ENCODE measurements at regions of chr9 and their contacts with region 1.

Region 1: DNA sequence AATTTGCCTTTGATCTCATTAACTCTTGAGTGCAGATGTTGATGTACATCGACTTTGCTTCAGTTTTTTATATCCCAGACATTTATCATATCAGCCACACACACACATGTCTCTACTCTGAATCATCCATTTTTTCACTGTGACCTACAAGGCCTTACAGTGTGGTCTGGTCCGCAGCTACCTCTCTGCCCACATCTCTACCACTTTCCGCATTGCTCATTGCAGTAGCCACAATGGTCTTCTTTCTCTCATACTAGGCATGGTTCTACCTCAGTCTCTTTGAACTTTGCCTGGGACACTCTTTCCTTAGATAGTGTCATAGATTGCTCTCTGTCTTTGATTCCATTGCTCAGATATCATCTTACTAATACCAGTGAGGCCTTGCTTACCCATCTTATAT is 87.9 kb upstream of the FSD1L start:
- DNase-seq: peak; percentile 84
- H3K4me3 Mint-ChIP-seq: no peak overlapping the region
- H3K27ac Mint-ChIP-seq: no peak overlapping the region
- H3K4me1 Mint-ChIP-seq: peaks cover 13% of the 10 kb centered on the region
- H3K27me3 Mint-ChIP-seq: no peaks in the 10 kb centered on the region

Region 2: GRCh38 chr9:104982543-104982942 is 377.3 kb before region 1 on chr9:
- CTCF ChIA-PET with region 1: no interaction called
- POLR2A ChIA-PET with region 1: no interaction called
- intact Hi-C with region 1: no loop called
- DNase-seq: no peak
- H3K4me3 Mint-ChIP-seq: no peak overlapping the region
- H3K27ac Mint-ChIP-seq: no peak overlapping the region
- H3K4me1 Mint-ChIP-seq: peaks cover 39% of the 10 kb centered on the region
- H3K27me3 Mint-ChIP-seq: peaks cover 20% of the 10 kb centered on the region

Region 3: DNA sequence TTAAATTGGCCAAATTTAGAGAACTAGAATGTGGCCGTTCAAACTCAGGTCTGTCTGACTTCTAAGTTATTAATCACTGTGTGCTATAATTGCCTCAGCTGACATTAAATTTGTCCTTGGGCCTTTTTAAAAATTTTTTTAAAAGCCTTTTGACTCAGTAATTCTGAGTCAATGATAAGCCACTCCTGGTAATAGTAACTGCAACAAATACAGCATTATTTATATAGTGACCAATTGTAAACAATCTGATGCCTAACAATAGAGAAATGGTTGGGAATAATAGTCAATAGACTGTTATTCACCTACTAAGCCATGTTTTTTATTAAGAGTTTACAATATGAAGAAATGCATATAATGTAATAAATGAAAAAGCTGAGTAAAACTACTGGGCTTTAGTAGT is 17.0 kb after region 1 on chr9:
- CTCF ChIA-PET with region 1: no interaction called
- POLR2A ChIA-PET with region 1: no interaction called
- intact Hi-C with region 1: no loop called
- DNase-seq: no peak
- H3K4me3 Mint-ChIP-seq: no peak overlapping the region
- H3K27ac Mint-ChIP-seq: no peak overlapping the region
- H3K4me1 Mint-ChIP-seq: no peaks in the 10 kb centered on the region
- H3K27me3 Mint-ChIP-seq: no peaks in the 10 kb centered on the region

Region 4: DNA sequence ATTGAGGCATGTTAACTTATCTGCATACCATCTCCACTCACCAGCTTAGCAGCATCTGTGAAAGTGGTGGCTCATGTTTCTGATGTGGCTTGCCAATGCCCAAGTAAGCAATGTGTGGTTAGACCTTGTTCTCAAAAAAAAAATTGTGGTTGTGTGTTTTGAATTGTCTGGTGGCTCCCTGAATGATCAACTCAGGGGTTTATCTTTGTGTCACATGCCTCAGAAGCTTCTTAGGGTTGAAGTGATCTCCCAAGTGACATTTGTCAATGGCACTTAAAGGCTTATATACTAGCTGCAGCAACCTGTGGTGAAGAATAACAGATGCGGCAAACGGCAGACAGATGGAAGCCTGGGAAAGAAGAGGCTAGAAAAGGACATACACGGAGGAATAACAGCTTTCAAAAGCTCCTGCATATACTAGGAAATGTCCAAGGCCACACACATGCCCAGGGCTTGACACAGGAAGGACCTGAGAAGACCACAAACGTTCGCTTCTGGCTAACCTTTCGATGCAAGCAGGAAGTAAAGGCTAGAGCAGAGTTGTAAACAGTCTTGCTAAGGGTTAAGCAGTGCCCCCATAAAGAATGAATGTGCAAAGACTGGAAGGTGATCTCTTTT is 45.7 kb after region 1 on chr9:
- CTCF ChIA-PET with region 1: interaction called, 4 read pairs
- POLR2A ChIA-PET with region 1: interaction called, 5 read pairs
- intact Hi-C with region 1: loop called (anchors 2 kb)
- DNase-seq: peak; percentile 71
- H3K4me3 Mint-ChIP-seq: peak overlapping the region; percentile 7
- H3K27ac Mint-ChIP-seq: peak overlapping the region; percentile 43
- H3K4me1 Mint-ChIP-seq: peaks cover 25% of the 10 kb centered on the region
- H3K27me3 Mint-ChIP-seq: peaks cover 70% of the 10 kb centered on the region